ENCODE measurements at regions of chr1 and their contacts with region 1.

Region 1: GRCh38 chr1:110087812-110088738 is 17.6 kb upstream of the ALX3 start:
- DNase-seq: peak in 1 of 2 experiments; percentile 78
- H3K4me3 ChIP-seq: no peak overlapping the region
- H3K27ac ChIP-seq: no peak overlapping the region
- H3K4me1 ChIP-seq: peaks cover 0 to 22% (median 9%) of the 10 kb centered on the region in 4 experiments; a peak in 6 of 7 replicates
- H3K27me3 ChIP-seq: peaks cover 39 to 55% (median 47%) of the 10 kb centered on the region in 4 experiments
- CTCF ChIP-seq: peak; percentile 52 to 74 (median 73)
- EP300 ChIP-seq: no peak
- POLR2A ChIP-seq: no peak
- RAD21 ChIP-seq: peak; percentile 56 to 71

Region 2: GRCh38 chr1:109864047-109864822 is 223.8 kb before region 1 on chr1:
- CTCF ChIA-PET with region 1: no interaction called
- POLR2A ChIA-PET with region 1: no interaction called
- DNase-seq: no peak
- H3K4me3 ChIP-seq: no peak overlapping the region
- H3K27ac ChIP-seq: 0 out of 2 replicates have a peak overlapping the region, but pooled peaks have one; percentile 2
- H3K4me1 ChIP-seq: peaks cover 3 to 7% (median 5%) of the 10 kb centered on the region in 4 experiments
- H3K27me3 ChIP-seq: no peaks in the 10 kb centered on the region
- CTCF ChIP-seq: no peak
- EP300 ChIP-seq: no peak
- POLR2A ChIP-seq: no peak
- RAD21 ChIP-seq: no peak

Region 3: GRCh38 chr1:109975718-109976117 is 112.4 kb before region 1 on chr1:
- CTCF ChIA-PET with region 1: no interaction called
- POLR2A ChIA-PET with region 1: no interaction called
- DNase-seq: no peak
- H3K4me3 ChIP-seq: no peak overlapping the region
- H3K27ac ChIP-seq: no peak overlapping the region
- H3K4me1 ChIP-seq: no peaks in the 10 kb centered on the region
- H3K27me3 ChIP-seq: no peaks in the 10 kb centered on the region
- CTCF ChIP-seq: no peak
- EP300 ChIP-seq: no peak
- POLR2A ChIP-seq: no peak
- RAD21 ChIP-seq: no peak

Region 4: DNA sequence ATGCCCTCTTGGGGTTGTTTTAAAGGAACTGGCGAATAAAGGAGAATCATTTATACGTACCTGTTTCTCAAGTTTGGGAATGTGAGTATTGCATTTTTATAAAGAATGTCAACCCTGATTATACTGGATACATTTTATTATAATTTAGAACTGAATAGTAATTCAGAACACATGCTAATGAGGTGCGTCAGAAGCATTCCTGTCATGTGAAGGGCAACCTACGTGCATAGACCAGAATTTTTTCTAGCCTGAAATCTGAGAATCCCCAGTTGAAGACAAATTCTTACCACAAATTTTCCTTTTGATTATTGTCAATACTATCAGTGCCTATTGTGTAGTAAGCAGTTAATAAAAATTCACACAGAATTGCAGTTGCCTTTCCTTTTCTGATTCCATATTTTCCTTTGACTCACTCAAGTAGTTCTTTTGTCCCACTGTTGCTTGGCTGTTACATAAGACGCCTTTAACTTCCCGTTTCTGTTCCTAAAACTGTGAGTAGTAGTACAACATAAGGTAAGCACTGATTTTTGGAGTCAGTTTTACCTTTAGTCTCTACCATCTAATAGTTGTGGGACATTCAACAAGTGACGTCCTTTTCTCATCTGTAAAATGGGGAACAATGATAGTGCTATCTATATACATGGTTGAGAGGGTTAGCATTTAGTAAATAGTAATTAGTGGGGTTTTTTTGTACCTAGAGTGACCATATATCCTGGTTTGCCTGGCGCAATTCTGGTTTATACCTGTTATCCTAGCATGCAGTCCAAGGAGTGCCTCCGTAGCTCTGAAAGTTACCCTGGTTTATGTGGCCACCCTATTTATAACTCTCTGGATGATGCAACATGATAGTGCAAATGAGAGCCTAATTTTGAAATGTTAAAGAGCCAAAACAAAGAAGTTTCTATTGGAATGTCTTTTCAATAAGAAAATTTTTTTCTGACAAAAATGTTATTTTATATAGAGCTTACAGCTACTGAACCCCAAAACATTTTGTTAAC is 98.1 kb before region 1 on chr1:
- CTCF ChIA-PET with region 1: no interaction called
- POLR2A ChIA-PET with region 1: no interaction called
- DNase-seq: no peak
- H3K4me3 ChIP-seq: no peak overlapping the region
- H3K27ac ChIP-seq: no peak overlapping the region
- H3K4me1 ChIP-seq: peaks cover 4 to 9% (median 7%) of the 10 kb centered on the region in 4 experiments; a peak in 6 of 7 replicates
- H3K27me3 ChIP-seq: no peaks in the 10 kb centered on the region
- CTCF ChIP-seq: no peak
- EP300 ChIP-seq: no peak
- POLR2A ChIP-seq: no peak
- RAD21 ChIP-seq: no peak

Region 5: DNA sequence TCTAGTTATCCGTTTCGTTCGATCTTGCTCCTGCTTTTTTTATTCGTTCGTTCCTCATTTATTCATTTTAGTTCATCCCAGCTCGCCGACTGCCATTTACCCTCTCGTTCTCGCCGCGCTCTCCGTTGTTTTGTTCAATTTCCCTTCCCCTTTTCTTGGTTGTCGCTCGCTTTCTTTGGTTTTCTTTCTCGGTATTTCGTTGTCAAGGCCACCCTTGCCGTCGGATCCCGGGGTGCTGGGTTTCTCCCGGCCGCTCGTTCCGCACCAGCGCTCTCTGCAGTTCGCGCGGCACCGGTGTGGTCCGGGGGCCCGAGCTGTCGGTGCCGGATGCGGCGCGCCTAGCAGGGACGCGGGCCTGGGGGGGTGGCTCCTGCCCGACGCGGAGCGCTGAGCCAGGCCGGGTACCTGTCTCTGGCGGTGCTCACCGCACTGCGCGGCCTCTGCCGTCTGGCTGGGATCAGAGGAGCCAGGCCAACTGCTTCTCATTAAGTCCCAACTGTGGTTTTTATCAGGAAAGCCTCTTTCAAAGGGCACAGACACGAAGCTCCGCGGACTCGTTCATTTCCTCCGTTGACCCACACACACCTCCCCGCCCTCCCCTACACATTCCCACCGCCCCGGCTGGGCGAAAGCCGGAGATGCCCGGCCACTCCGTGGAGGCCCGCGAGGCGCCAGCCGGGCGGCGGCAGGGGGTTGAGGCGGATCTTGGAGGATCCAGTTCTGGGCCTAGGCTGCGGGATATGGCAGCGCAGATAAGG is 19.2 kb before region 1 on chr1:
- CTCF ChIA-PET with region 1: interaction called, 1,450 read pairs
- POLR2A ChIA-PET with region 1: interaction called, 11 read pairs
- DNase-seq: peak in 1 of 2 experiments; percentile 66
- H3K4me3 ChIP-seq: peak overlapping the region in 2 of 4 experiments; percentile 43 to 56; a peak in 5 of 8 replicates
- H3K27ac ChIP-seq: no peak overlapping the region
- H3K4me1 ChIP-seq: peaks cover 3 to 31% (median 15%) of the 10 kb centered on the region in 4 experiments; a peak in 6 of 7 replicates
- H3K27me3 ChIP-seq: peaks cover 62 to 93% (median 83%) of the 10 kb centered on the region in 4 experiments
- CTCF ChIP-seq: no peak
- EP300 ChIP-seq: no peak
- POLR2A ChIP-seq: no peak
- RAD21 ChIP-seq: no peak

Region 6: GRCh38 chr1:110076789-110077500 is 11.1 kb before region 1 on chr1:
- CTCF ChIA-PET with region 1: interaction called, 1,450 read pairs
- POLR2A ChIA-PET with region 1: interaction called, 11 read pairs
- DNase-seq: no peak
- H3K4me3 ChIP-seq: no peak overlapping the region
- H3K27ac ChIP-seq: no peak overlapping the region
- H3K4me1 ChIP-seq: no peaks in the 10 kb centered on the region
- H3K27me3 ChIP-seq: peaks cover 9 to 56% (median 30%) of the 10 kb centered on the region in 4 experiments
- CTCF ChIP-seq: no peak
- EP300 ChIP-seq: no peak
- POLR2A ChIP-seq: no peak
- RAD21 ChIP-seq: no peak

Region 7: GRCh38 chr1:110106013-110106941 is 18.2 kb after region 1 on chr1:
- CTCF ChIA-PET with region 1: interaction called, 845 read pairs
- POLR2A ChIA-PET with region 1: interaction called, 4 read pairs
- DNase-seq: peak; percentile 51 to 84
- H3K4me3 ChIP-seq: no peak overlapping the region
- H3K27ac ChIP-seq: no peak overlapping the region
- H3K4me1 ChIP-seq: no peaks in the 10 kb centered on the region
- H3K27me3 ChIP-seq: no peaks in the 10 kb centered on the region; a peak in 2 of 7 replicates
- CTCF ChIP-seq: peak; percentile 91 to 99 (median 97)
- EP300 ChIP-seq: no peak
- POLR2A ChIP-seq: no peak
- RAD21 ChIP-seq: peak; percentile 89 to 91

Region 8: DNA sequence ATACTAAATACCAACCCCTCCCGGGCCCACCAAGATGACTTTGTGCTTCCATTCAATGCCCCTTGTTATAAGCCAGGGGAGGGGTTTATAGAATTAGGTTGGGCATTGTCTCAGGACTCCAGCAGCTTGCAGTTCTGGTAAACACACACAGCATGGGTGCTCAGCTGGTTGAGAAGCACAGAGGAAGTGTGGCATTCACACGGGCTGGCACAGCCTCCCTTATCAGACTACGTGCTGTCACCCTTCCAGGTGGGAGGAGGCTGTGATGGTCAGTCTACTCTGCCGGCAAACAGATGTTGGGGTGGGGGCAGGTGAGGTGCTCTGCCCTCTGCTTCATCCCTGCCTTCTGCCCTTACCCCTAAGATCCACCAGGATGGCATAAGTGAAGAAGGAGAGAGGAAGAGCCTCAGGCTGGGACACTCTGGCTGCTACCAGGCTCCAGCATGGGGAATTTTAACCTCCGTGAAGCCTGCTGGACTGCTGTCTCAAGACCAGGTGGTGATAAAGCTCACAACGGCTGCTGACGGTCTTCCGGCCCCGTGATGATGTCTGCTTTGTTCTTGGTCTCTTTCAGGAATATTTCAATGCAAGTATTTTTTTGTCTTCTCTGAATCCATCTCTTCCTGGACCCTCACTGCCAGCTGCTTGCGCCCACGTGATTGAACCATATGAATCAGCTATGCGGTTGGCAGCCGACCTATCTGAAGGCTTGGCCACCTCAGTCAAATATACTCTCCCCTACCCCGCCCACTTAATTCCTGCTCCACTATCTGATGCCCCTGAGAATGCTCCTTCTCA is 47.4 kb after region 1 on chr1:
- CTCF ChIA-PET with region 1: interaction called, 12 read pairs
- POLR2A ChIA-PET with region 1: no interaction called
- DNase-seq: no peak
- H3K4me3 ChIP-seq: no peak overlapping the region
- H3K27ac ChIP-seq: no peak overlapping the region
- H3K4me1 ChIP-seq: peaks cover 7 to 25% (median 17%) of the 10 kb centered on the region in 4 experiments
- H3K27me3 ChIP-seq: peaks cover 0 to 2% (median 0%) of the 10 kb centered on the region in 4 experiments; a peak in 3 of 7 replicates
- CTCF ChIP-seq: no peak
- EP300 ChIP-seq: no peak
- POLR2A ChIP-seq: no peak
- RAD21 ChIP-seq: no peak

Region 9: GRCh38 chr1:110144366-110144765 is 56.3 kb after region 1 on chr1:
- CTCF ChIA-PET with region 1: interaction called, 11 read pairs
- POLR2A ChIA-PET with region 1: no interaction called
- DNase-seq: no peak
- H3K4me3 ChIP-seq: no peak overlapping the region
- H3K27ac ChIP-seq: no peak overlapping the region
- H3K4me1 ChIP-seq: no peaks in the 10 kb centered on the region
- H3K27me3 ChIP-seq: peaks cover 5 to 37% (median 21%) of the 10 kb centered on the region in 4 experiments
- CTCF ChIP-seq: no peak
- EP300 ChIP-seq: no peak
- POLR2A ChIP-seq: no peak
- RAD21 ChIP-seq: no peak

Measured in H1 (cell line).